Thyroid gland (tissue), 4 donors: ENCODE measurements at regions of chr6 and their contacts with region 1.

Region 1: DNA sequence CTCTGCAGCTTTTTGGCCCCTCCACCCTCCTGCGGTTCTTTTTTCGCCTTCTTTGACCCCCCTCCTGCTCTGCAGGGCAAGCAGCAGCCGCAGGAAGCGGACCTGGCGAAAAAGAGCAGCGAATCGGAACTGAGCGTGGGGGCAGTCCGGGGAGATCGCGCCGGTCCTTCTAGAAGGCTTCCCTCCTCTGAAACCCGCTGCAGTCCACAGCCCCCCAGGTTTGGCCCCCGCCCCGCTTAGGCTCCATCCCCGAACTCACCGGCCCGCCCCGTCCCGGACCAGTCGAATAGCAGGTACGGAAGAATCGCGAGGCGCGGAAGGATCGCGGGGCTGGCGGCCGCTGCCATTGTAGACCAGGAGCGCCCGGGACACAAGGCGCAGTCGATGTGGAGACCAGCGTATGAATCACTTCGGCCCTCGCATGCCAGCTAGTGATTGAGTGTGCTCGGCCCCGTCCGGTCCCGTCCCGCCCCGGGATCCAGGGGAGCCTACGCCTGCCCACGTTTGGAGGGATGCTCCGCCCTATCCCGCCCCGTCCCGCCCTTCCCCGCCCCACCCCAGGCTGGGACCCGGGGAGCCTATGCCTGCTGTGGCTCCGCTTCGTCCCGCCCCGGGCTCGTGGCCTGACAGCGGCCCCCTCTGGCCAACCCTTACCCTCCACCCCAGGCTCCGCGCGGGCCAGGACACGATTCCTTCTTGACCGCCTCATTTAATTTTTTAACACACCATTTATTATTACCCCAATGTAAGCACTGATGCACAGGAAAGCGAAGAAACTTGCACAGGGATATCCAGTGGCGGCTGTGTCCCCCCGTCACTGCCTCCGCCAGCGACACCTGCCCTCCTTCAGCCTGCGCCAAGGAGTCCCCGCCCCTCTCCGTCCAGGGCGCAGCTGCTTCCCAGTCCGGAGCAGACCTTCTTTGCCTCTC is at the start of gene ULBP3:
- DNase-seq: peak; percentile 94 to 95
- H3K4me3 ChIP-seq: peak within 1 kb of the TSS; percentile 69 to 91 (median 71)
- H3K27ac ChIP-seq: peak within 1 kb of the TSS; percentile 53 to 70 (median 54)
- H3K4me1 ChIP-seq: peaks cover 9 to 20% of the 10 kb centered on the region in 2 donors
- H3K27me3 ChIP-seq: no peaks in the 10 kb centered on the region
- CTCF ChIP-seq: peak in 5 of 6 experiments; percentile 43 to 69 (median 62)
- POLR2A ChIP-seq: peak in 1 of 2 donors; percentile 92
- total RNA-seq, gene ULBP3: 2.4 to 31.7 (median 16.5) TPM

Region 2: GRCh38 chr6:149934249-149935156 is 134.5 kb before region 1 on chr6:
- intact Hi-C with region 1: loop called (anchors 5 kb)
- DNase-seq: peak; percentile 63 to 68
- H3K4me3 ChIP-seq: no peak overlapping the region
- H3K27ac ChIP-seq: no peak overlapping the region
- H3K4me1 ChIP-seq: peaks cover 14% of the 10 kb centered on the region in 2 donors
- H3K27me3 ChIP-seq: peaks cover 17% of the 10 kb centered on the region
- CTCF ChIP-seq: peak; percentile 69 to 86 (median 80)
- POLR2A ChIP-seq: no peak

Region 3: GRCh38 chr6:150025201-150025917 is 43.6 kb before region 1 on chr6 and contains the start of gene RAET1L:
- intact Hi-C with region 1: no loop called
- DNase-seq: peak; percentile 63 to 68
- H3K4me3 ChIP-seq: peak within 1 kb of the TSS in 1 of 3 donors; percentile 8
- H3K27ac ChIP-seq: no peak within 1 kb of the TSS
- H3K4me1 ChIP-seq: peaks cover 0 to 12% of the 10 kb centered on the region in 2 donors
- H3K27me3 ChIP-seq: no peaks in the 10 kb centered on the region
- CTCF ChIP-seq: no peak
- POLR2A ChIP-seq: no peak
- total RNA-seq, gene RAET1L: not detected